Caco-2 (cell line): ENCODE measurements at regions of chr22 and their contacts with region 1.

Region 1: GRCh38 chr22:42614312-42615091 is at the start of gene POLDIP3:
- DNase-seq: peak; percentile 98
- H3K4me3 ChIP-seq: peak within 1 kb of the TSS; percentile 55
- H3K4me3 Mint-ChIP-seq: peak within 1 kb of the TSS; percentile 85
- H3K27ac Mint-ChIP-seq: peak within 1 kb of the TSS; percentile 100
- H3K4me1 ChIP-seq: peaks cover 5% of the 10 kb centered on the region; the same call in 1 of the 2 replicates
- H3K4me1 Mint-ChIP-seq: peaks cover 8% of the 10 kb centered on the region
- H3K27me3 ChIP-seq: no peaks in the 10 kb centered on the region
- H3K27me3 Mint-ChIP-seq: no peaks in the 10 kb centered on the region
- CTCF ChIP-seq: peak in 1 of 2 experiments; percentile 45
- total RNA-seq, gene POLDIP3: 70.0 and 70.8 TPM in 2 replicates

Region 2: DNA sequence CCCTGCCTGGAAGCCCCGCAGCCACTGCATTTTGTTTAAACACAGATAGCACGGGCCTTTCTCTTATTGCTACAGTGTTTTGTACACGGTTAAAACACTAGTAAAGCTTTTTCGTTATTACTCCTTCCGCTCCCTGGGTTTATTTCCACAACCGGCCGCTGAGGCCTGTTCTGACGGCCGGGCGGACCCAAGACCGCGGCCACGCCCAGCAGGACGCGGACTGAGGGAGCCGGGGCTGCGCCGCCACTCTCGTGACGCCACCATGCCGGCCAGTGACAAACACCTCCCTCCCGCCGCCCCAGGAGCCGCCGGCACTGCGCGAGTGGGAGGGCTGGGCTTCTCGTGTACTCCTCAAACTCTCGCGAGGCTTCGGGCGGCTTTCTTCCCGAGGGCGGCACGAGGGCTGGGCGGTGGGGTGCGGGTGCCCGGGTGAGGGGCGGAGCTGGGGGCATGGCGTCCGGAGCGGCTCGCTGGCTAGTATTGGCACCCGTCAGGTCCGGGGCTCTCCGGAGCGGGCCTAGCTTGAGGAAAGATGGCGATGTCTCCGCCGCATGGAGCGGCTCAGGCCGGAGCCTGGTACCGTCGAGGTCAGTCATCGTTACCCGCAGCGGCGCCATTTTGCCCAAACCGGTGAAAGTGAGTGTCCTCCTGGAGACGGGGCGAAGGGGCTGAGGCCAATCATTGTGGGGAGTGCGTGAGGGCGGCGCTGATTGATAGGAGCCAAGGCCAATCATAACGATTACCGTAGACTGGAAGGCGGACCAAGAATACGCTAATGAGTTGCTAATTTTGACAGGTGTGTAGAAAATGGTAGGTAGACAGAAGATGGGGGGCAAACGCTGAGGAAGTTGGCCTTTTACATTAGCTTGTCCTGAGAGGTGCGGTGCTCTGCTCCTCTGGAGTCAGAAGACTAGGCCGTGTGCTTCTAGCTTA is 534.9 kb before region 1 on chr22 and contains the start of gene SMDT1:
- CTCF ChIA-PET with region 1: no interaction called
- POLR2A ChIA-PET with region 1: no interaction called
- intact Hi-C with region 1: loop called (anchors 10 kb)
- DNase-seq: peak; percentile 98 to 99
- H3K4me3 ChIP-seq: peak within 1 kb of the TSS; percentile 94
- H3K4me3 Mint-ChIP-seq: peak within 1 kb of the TSS; percentile 96
- H3K27ac Mint-ChIP-seq: peak within 1 kb of the TSS; percentile 93
- H3K4me1 ChIP-seq: peaks cover 14% of the 10 kb centered on the region
- H3K4me1 Mint-ChIP-seq: peaks cover 10% of the 10 kb centered on the region
- H3K27me3 ChIP-seq: no peaks in the 10 kb centered on the region
- H3K27me3 Mint-ChIP-seq: no peaks in the 10 kb centered on the region
- CTCF ChIP-seq: no peak
- total RNA-seq, gene SMDT1: 65.7 and 68.6 TPM in 2 replicates

Region 3: GRCh38 chr22:42533638-42533977 is 80.9 kb before region 1 on chr22:
- CTCF ChIA-PET with region 1: no interaction called
- POLR2A ChIA-PET with region 1: no interaction called
- intact Hi-C with region 1: loop called (anchors 1 kb)
- DNase-seq: no peak
- H3K4me3 ChIP-seq: no peak overlapping the region
- H3K4me3 Mint-ChIP-seq: peak overlapping the region; percentile 72
- H3K27ac Mint-ChIP-seq: no peak overlapping the region
- H3K4me1 ChIP-seq: peaks cover 19% of the 10 kb centered on the region
- H3K4me1 Mint-ChIP-seq: peaks cover 23% of the 10 kb centered on the region
- H3K27me3 ChIP-seq: no peaks in the 10 kb centered on the region
- H3K27me3 Mint-ChIP-seq: no peaks in the 10 kb centered on the region
- CTCF ChIP-seq: no peak